Activated T-helper 2 cell treated with anti-CD3 and anti-CD28 coated beads, Interferon-gamma antibody, Interleukin-2, Interleukin-4, amounts not matched to agents 10 μg/mL and 5 μg/mL and 100 μg/mL, durations not matched to agents 14 hours and 24 hours and 36 hours (primary cell): ENCODE measurements at regions of chr16 and their contacts with region 1.

Region 1: DNA sequence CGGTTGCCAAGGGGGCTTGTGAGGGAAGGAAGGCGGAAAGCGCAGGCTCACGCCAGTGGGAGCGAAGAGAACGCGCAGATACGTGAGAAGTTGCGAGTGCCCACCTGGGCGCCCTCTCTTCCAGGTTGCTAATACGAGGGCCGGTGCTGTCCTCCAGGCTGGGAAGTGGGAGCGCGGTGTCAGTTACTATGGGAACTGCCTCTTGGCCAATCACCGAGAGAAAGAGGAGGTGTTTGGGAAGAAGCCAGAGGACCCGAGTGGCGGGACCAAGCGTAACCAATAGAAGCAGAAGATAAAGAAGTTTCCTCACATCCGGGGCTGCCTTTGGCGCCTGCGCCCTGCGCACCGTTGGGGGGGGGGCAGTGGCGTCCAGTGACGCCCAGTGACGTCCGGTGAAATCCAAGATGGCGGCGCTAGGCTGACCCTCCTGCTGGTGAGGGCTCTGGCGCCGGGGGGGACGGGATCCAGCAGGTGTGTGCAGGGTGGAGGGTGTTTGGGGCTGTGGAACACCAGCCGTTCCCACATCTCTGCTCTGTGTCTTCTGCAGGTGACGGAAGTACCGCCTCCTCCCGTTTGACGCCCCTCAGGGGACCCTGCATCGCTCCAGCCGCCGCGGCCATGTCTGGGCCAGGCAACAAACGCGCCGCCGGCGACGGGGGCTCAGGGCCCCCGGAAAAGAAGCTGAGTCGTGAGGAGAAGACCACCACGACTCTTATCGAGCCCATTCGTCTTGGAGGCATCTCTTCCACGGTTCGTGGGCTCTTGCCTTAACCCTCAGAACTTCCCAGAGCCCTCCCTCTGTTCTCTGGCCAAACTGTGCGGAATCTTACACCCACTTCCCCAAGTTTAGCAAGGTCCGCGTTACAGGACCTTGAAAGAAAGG is at the starts of genes CFAP119 and RNF40:
- DNase-seq: peak; percentile 95
- H3K4me3 Mint-ChIP-seq: peak within 1 kb of the TSS; percentile 85
- H3K27ac Mint-ChIP-seq: peak within 1 kb of the TSS; percentile 83
- H3K4me1 Mint-ChIP-seq: peaks cover 17% of the 10 kb centered on the region
- H3K27me3 Mint-ChIP-seq: no peaks in the 10 kb centered on the region
- total RNA-seq, gene CFAP119: 2.3 and 2.8 TPM in 2 replicates
- total RNA-seq, gene RNF40: 83.8 and 91.6 TPM in 2 replicates

Region 2: GRCh38 chr16:30747799-30748634 is 14.2 kb before region 1 on chr16 and contains the start of gene PHKG2:
- intact Hi-C with region 1: loop called (anchors 1 kb)
- DNase-seq: peak; percentile 98
- H3K4me3 Mint-ChIP-seq: peak within 1 kb of the TSS; percentile 94
- H3K27ac Mint-ChIP-seq: peak within 1 kb of the TSS; percentile 78
- H3K4me1 Mint-ChIP-seq: peaks cover 18% of the 10 kb centered on the region
- H3K27me3 Mint-ChIP-seq: no peaks in the 10 kb centered on the region
- total RNA-seq, gene PHKG2: 38.1 and 41.6 TPM in 2 replicates

Region 3: GRCh38 chr16:30775392-30776188 is 13.4 kb after region 1 on chr16:
- intact Hi-C with region 1: no loop called
- DNase-seq: peak; percentile 54
- H3K4me3 Mint-ChIP-seq: peak overlapping the region; percentile 93
- H3K27ac Mint-ChIP-seq: peak overlapping the region; percentile 94
- H3K4me1 Mint-ChIP-seq: peaks cover 12% of the 10 kb centered on the region
- H3K27me3 Mint-ChIP-seq: no peaks in the 10 kb centered on the region

Region 4: GRCh38 chr16:30957456-30958174 is 195.4 kb after region 1 on chr16 and contains the start of gene SETD1A:
- intact Hi-C with region 1: loop called (anchors 1 kb)
- DNase-seq: peak; percentile 94
- H3K4me3 Mint-ChIP-seq: peak within 1 kb of the TSS; percentile 95
- H3K27ac Mint-ChIP-seq: peak within 1 kb of the TSS; percentile 99
- H3K4me1 Mint-ChIP-seq: peaks cover 26% of the 10 kb centered on the region
- H3K27me3 Mint-ChIP-seq: no peaks in the 10 kb centered on the region
- total RNA-seq, gene SETD1A: 28.9 TPM in 2 replicates

Region 5: DNA sequence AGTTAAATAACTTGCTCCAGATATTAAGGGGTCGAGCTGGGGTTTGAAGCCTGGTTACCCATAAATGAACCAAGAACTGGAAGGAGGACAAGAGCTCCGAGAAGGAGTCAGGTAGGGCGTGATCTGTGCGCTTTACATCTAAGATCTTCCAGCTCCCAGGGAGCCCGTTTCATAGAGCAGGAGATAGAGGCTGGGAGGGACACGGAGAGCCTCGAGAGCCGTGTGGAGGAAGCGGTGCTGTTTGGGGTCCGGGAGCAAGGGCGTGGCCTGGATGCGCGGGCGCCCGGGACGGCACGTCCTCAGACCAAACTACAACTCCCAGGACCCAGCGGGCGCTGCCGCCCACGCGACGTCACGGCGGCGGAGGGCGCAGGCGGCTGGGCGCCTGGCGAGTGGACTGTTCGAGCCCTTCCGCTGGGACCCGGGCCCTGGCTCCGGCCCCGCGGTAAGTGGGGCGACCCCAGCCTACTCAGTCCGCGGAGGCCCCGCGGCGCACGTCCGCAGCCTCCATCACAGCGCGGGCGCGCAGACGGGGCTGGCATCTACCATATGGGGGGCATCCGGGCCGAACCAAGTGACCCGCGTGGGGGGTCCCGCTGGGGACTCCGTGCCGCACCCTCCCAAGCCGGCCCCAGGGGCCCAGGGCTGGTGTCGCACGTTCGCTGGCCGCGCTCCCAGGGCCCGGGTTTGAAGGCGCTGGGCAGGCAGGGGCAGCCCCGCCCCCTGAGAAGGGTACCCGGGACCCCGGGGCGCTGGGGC is 346.0 kb after region 1 on chr16 and contains the start of gene BCKDK:
- intact Hi-C with region 1: no loop called
- DNase-seq: peak; percentile 65
- H3K4me3 Mint-ChIP-seq: peak within 1 kb of the TSS; percentile 85
- H3K27ac Mint-ChIP-seq: peak within 1 kb of the TSS; percentile 91
- H3K4me1 Mint-ChIP-seq: peaks cover 18% of the 10 kb centered on the region
- H3K27me3 Mint-ChIP-seq: no peaks in the 10 kb centered on the region
- total RNA-seq, gene BCKDK: 47.5 and 50.0 TPM in 2 replicates